Posterior vena cava (tissue), 2 donors: ENCODE measurements at regions of chr1 and their contacts with region 1.

Region 1: GRCh38 chr1:201807958-201808632 is 20.9 kb upstream of the IPO9 start:
- DNase-seq: no peak

Region 2: DNA sequence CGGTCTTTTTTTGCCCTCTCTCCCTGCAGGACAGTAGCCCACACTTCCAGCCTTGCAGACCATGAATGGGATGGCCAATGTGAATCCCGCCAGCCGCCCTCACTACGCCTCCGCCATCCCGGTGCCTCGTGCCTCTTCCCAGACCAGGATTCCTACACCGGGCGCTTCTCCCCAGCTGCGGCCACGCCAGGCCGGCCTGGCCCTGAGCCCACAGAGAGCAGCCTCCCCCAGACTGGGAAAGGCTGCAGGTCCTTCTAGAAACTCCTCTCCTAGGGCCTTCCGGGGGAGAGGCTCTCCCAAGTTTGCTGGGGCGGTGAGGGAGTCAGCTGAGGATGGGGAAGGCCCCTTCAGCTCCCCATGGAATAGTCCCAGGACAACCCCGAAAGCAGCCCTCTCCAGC is 185.3 kb before region 1 on chr1:
- intact Hi-C with region 1: loop called in 1 of 2 experiments (anchors 1 kb)
- DNase-seq: peak; percentile 58